ENCODE measurements at regions of chr3 and their contacts with region 1.

Region 1: GRCh38 chr3:124905849-124906248 is 18.7 kb upstream of the ITGB5 start:
- DNase-seq: no peak
- ATAC-seq: no peak
- H3K4me3 ChIP-seq: no peak overlapping the region
- H3K27ac ChIP-seq: no peak overlapping the region
- H3K4me1 ChIP-seq: no peaks in the 10 kb centered on the region
- H3K27me3 ChIP-seq: no peaks in the 10 kb centered on the region

Region 2: DNA sequence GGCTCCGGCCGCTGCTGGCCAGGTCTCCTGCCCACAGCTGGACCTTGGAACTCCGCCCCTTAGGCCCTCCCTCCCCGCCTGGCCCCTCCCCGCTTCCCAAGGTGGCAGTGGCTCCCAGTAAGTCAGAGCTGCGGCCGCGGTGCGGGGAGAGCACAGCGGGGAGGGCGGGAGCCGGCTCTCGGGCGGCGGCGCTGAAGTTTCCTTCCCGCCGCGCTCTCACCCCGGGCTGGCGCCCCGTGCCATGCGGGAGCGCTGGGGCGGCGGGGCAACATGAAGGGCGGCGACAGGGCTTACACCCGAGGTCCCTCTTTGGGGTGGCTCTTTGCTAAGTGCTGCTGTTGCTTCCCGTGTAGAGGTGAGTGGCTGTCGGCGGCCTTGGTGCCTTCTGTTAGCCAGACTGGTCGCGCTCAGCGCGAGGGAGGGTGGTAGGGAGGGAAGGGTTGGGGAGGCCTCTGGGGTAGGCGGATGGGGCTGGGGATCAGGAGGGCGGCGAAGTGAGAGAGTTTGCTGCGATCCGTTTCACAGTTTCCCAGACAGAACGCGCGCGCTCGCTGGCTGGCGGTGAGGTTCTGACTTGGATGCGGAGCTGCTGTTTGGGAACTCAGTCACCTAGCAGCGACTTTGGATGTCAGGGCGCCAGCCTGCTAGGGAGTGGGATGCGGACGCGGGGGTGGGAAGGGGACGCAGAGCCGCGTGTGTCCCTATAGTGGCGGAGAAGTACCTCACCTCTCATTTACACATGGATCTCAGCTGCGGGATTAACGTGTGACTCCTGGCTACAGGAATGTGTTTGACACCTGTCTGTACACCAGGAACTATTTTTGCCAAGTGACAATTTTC is 321.1 kb before region 1 on chr3:
- intact Hi-C with region 1: loop called in 1 of 2 experiments (anchors 10 kb)
- DNase-seq: peak; percentile 83 to 92
- ATAC-seq: peak; percentile 85
- H3K4me3 ChIP-seq: peak overlapping the region in 1 of 2 donors; percentile 37
- H3K27ac ChIP-seq: no peak overlapping the region
- H3K4me1 ChIP-seq: peaks cover 0 to 2% of the 10 kb centered on the region in 2 donors
- H3K27me3 ChIP-seq: no peaks in the 10 kb centered on the region

Region 3: GRCh38 chr3:124761250-124761796 is 144.5 kb before region 1 on chr3:
- intact Hi-C with region 1: loop called (anchors 1 kb)
- DNase-seq: peak; percentile 91 to 96
- ATAC-seq: peak; percentile 91
- H3K4me3 ChIP-seq: no peak overlapping the region
- H3K27ac ChIP-seq: peak overlapping the region in 1 of 2 donors; percentile 43
- H3K4me1 ChIP-seq: no peaks in the 10 kb centered on the region
- H3K27me3 ChIP-seq: no peaks in the 10 kb centered on the region

Region 4: DNA sequence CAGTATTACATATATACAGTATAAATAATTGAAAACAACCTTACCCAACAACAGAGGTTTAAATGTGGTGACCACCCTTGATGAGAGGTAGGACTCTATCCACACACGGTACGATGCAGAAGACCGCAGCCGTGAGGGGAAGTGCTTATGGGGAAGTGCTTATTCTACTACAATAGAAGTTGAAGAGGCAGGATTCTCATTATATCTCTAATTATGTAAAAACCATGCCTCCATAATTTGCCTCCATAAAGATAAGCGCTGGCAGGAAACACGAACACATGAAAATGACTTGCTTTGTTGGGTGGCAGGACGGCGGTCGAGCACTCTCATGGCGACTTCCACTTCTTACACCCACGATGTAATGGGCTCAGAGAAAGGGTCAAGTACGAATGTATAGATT is 35.9 kb after region 1 on chr3:
- intact Hi-C with region 1: no loop called
- DNase-seq: no peak
- ATAC-seq: no peak
- H3K4me3 ChIP-seq: no peak overlapping the region
- H3K27ac ChIP-seq: no peak overlapping the region
- H3K4me1 ChIP-seq: no peaks in the 10 kb centered on the region
- H3K27me3 ChIP-seq: no peaks in the 10 kb centered on the region